K562 (cell line): ENCODE measurements at regions of chr18 and their contacts with region 1.

Region 1: DNA sequence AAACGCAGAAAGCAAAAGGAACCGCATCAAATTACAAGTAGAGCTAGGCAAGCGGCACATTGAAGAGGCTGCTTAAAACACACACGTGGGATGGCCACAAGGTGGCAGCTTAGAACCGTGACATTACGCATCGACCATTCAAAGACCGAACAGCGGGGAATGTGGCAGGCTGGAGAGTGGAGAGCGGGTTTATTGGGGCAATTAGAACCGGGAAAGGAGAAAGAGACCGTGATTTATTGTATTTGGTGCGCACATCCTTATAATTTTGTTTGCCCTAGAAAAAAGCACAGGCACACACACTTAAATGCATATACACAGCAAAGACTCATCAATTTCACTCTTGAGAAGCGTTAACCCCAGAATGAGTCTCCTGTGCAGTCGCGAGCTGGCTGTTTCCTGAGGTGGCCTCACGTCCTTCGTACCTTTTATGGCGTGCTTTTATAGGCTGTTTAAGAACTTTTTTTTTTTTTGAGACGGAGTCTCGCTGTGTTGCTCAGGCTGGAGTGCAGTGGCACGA is 31.7 kb upstream of the MEP1B start:
- DNase-seq: peak; percentile 67 to 89 (median 71)
- ATAC-seq: peak; percentile 97
- H3K4me3 ChIP-seq: no peak overlapping the region
- H3K27ac ChIP-seq: no peak overlapping the region
- H3K4me1 ChIP-seq: no peaks in the 10 kb centered on the region
- H3K27me3 ChIP-seq: peaks cover 0 to 4% of the 10 kb centered on the region in 2 experiments; a peak in 1 of 5 replicates
- CTCF ChIP-seq: peak; percentile 82 to 91 (median 89)
- EP300 ChIP-seq: no peak
- POLR2A ChIP-seq: no peak
- RAD21 ChIP-seq: peak; percentile 77 to 94

Region 2: GRCh38 chr18:32271672-32272208 is 113.6 kb after region 1 on chr18:
- CTCF ChIA-PET with region 1: no interaction called
- POLR2A ChIA-PET with region 1: no interaction called
- in situ Hi-C with region 1: no loop called
- intact Hi-C with region 1: loop called (anchors 5 kb)
- DNase-seq: peak; percentile 34 to 56 (median 47)
- ATAC-seq: peak; percentile 87
- H3K4me3 ChIP-seq: no peak overlapping the region
- H3K27ac ChIP-seq: no peak overlapping the region
- H3K4me1 ChIP-seq: no peaks in the 10 kb centered on the region
- H3K27me3 ChIP-seq: 0 out of 5 replicates have a peak, but pooled peaks cover 0 to 2% of the 10 kb centered on the region in 2 experiments
- CTCF ChIP-seq: peak; percentile 41 to 75 (median 58); a peak in 3 of 6 replicates
- EP300 ChIP-seq: no peak
- POLR2A ChIP-seq: no peak
- RAD21 ChIP-seq: peak; percentile 68 to 79

Region 3: DNA sequence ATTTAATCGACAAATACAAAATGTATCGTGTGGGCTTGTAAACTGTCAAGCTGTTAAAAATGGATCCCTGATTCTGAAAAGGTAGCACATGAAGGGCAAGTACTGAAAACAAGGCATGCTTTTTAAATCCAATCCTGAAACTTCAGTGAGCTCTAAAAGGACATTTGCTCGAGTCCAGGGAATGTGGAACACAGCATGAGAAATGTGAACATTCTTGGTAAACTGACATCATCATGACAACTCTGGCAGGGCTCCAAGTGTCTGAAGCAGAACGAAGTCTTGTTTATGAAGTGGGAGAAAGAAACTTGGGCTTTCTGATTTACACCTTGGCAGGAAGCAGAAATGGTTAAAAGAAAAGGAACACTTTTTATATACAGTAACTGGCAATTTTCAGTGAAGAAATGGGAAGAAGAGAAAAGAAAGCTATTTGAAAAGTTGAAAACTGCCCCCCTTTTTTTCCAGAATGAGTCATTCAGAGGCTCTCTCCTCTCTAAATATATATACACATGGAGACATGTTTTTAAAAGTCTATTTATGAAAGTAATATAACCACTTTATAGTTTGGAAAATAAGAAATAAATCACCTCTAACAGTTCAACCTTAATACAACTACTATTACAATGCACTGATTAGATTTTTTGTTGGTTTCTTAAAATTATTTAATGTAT is 191.7 kb after region 1 on chr18:
- CTCF ChIA-PET with region 1: no interaction called
- POLR2A ChIA-PET with region 1: no interaction called
- in situ Hi-C with region 1: no loop called
- intact Hi-C with region 1: loop called (anchors 10 kb)
- DNase-seq: no peak
- ATAC-seq: no peak
- H3K4me3 ChIP-seq: no peak overlapping the region
- H3K27ac ChIP-seq: no peak overlapping the region
- H3K4me1 ChIP-seq: no peaks in the 10 kb centered on the region
- H3K27me3 ChIP-seq: no peaks in the 10 kb centered on the region
- CTCF ChIP-seq: no peak
- EP300 ChIP-seq: no peak
- POLR2A ChIP-seq: no peak
- RAD21 ChIP-seq: no peak

Region 4: DNA sequence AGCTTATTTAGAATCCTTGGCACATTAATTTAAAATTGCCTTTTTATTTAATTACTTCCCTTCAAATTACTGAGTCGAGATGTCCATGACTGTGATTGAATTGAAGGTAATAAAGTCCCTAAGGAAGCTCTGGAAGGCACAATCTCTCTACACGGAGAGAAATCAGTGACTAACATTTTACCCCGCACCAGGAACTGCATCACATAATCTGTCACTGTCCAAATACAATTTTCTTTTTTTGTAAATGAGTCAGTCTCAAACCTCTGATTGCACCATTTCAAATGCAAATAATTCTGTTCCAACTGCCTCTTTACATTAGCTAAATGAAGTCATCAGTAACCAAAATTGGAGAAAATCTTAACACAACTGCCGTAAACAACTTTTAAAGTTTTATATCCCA is 970.4 kb after region 1 on chr18:
- CTCF ChIA-PET with region 1: no interaction called
- POLR2A ChIA-PET with region 1: no interaction called
- in situ Hi-C with region 1: no loop called
- intact Hi-C with region 1: no loop called
- DNase-seq: no peak
- ATAC-seq: no peak
- H3K4me3 ChIP-seq: no peak overlapping the region
- H3K27ac ChIP-seq: no peak overlapping the region
- H3K4me1 ChIP-seq: no peaks in the 10 kb centered on the region
- H3K27me3 ChIP-seq: no peaks in the 10 kb centered on the region
- CTCF ChIP-seq: no peak
- EP300 ChIP-seq: no peak
- POLR2A ChIP-seq: no peak
- RAD21 ChIP-seq: no peak